Left cardiac atrium (tissue), 4 donors: ENCODE measurements at regions of chr14 and their contacts with region 1.

Region 1: GRCh38 chr14:59028476-59029202 is 159.8 kb upstream of the DAAM1 start:
- DNase-seq: peak; percentile 66
- ATAC-seq: peak; percentile 86 to 87

Region 2: DNA sequence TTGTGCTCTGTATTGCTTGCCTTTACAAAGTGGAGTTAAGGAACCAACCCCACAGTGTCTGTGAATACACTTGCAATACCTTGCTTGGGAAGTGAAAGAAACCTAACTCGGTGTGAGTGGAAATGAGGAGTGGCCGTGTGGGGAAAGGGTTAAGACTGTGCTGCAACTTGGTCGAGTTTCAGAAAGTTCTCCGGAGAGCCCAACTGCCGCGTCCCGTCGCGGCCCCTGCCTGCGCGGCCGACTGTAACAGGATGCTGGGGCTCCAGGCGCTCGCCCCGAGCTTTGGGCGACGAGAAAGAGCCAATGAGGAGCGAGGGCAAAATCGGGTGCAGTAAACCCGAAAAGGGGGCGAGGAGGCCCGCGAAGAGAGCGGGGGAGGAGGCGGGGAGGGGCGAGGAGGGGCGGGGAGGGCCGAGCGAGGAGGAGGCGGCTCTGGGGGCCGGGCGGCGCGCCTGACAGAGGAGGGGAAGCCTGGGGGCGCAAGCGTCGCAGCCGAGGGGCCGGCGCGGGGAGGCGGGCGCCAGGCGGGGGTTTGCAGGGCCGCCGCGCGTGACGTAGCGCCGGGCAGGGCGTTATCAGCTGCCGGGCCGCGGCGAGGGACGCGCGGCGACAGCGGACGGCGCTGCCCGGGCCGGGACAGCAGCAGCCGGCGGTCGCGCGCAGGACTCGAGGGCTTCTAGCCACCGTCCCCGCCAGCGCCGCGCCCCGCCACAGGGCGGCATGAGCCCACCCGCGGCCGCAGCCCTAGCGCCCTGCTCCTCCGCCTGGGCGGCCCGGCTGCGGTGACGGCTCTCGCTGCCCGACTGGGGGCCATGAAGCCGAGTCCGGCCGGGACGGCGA is 391.0 kb before region 1 on chr14 and contains the start of gene DACT1:
- intact Hi-C with region 1: loop called in 1 of 2 experiments (anchors 10 kb)
- DNase-seq: peak; percentile 79
- ATAC-seq: peak; percentile 83 to 87
- total RNA-seq, gene DACT1: 7.0 to 10.3 TPM